A673 (cell line): ENCODE measurements at regions of chr2 and their contacts with region 1.

Region 1: GRCh38 chr2:222318026-222318711 is 19.4 kb upstream of the PAX3 start:
- DNase-seq: peak; percentile 86
- H3K4me3 ChIP-seq: peak overlapping the region; percentile 58
- H3K27ac ChIP-seq: peak overlapping the region; percentile 59
- H3K4me1 ChIP-seq: peaks cover 23% of the 10 kb centered on the region
- H3K27me3 ChIP-seq: no peaks in the 10 kb centered on the region
- CTCF ChIP-seq: peak; percentile 70

Region 2: GRCh38 chr2:221494560-221494959 is 823.6 kb before region 1 on chr2:
- CTCF ChIA-PET with region 1: no interaction called
- POLR2A ChIA-PET with region 1: no interaction called
- intact Hi-C with region 1: no loop called
- DNase-seq: no peak
- H3K4me3 ChIP-seq: no peak overlapping the region
- H3K27ac ChIP-seq: no peak overlapping the region
- H3K4me1 ChIP-seq: no peaks in the 10 kb centered on the region
- H3K27me3 ChIP-seq: no peaks in the 10 kb centered on the region
- CTCF ChIP-seq: no peak

Region 3: DNA sequence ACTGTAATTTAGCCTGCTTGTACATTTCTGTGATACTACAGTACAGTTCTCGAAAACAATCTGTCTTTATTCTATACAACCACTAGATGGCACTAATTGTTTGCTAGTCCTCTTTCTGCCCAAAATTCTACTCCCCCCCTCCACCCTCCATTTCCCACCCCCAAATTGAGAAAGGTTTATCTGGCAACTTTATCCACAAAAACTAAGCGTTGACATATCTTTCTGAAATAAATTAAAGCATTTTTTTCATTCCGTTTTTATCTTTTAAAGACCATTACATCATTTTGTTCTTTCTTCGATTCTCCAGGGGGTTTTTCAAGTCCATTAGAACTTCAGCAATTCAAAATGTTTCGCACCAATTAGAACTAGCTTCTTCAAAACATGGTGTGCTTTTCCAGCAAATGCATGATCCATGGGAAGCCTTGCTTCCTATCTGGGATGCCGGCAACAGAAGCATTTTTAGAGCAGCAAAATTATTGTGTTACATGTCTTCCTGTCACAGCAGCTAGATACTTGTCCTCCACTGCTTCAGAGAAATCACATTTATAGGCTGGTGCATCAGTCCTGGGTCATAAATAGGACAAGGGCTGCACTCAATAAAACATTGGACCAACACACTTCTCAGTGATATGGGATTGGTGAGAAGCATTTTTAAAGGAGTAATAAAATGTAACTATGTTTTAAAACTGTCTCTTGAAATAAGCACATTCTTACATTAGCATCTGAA is 260.7 kb before region 1 on chr2:
- CTCF ChIA-PET with region 1: interaction called, 10 read pairs
- POLR2A ChIA-PET with region 1: no interaction called
- intact Hi-C with region 1: loop called (anchors 5 kb)
- DNase-seq: peak; percentile 64
- H3K4me3 ChIP-seq: no peak overlapping the region
- H3K27ac ChIP-seq: no peak overlapping the region
- H3K4me1 ChIP-seq: peaks cover 40% of the 10 kb centered on the region
- H3K27me3 ChIP-seq: no peaks in the 10 kb centered on the region
- CTCF ChIP-seq: peak; percentile 73

Region 4: GRCh38 chr2:222341331-222341730 is 23.2 kb after region 1 on chr2:
- CTCF ChIA-PET with region 1: no interaction called
- POLR2A ChIA-PET with region 1: interaction called, 13 read pairs
- intact Hi-C with region 1: no loop called
- DNase-seq: no peak
- H3K4me3 ChIP-seq: no peak overlapping the region
- H3K27ac ChIP-seq: no peak overlapping the region
- H3K4me1 ChIP-seq: no peaks in the 10 kb centered on the region
- H3K27me3 ChIP-seq: no peaks in the 10 kb centered on the region
- CTCF ChIP-seq: no peak

Region 5: GRCh38 chr2:222483513-222484039 is 165.4 kb after region 1 on chr2:
- CTCF ChIA-PET with region 1: interaction called, 7 read pairs
- POLR2A ChIA-PET with region 1: no interaction called
- intact Hi-C with region 1: loop called (anchors 5 kb)
- DNase-seq: peak; percentile 43
- H3K4me3 ChIP-seq: no peak overlapping the region
- H3K27ac ChIP-seq: no peak overlapping the region
- H3K4me1 ChIP-seq: peaks cover 17% of the 10 kb centered on the region
- H3K27me3 ChIP-seq: no peaks in the 10 kb centered on the region
- CTCF ChIP-seq: peak; percentile 40; the same call in 1 of the 2 replicates

Region 6: DNA sequence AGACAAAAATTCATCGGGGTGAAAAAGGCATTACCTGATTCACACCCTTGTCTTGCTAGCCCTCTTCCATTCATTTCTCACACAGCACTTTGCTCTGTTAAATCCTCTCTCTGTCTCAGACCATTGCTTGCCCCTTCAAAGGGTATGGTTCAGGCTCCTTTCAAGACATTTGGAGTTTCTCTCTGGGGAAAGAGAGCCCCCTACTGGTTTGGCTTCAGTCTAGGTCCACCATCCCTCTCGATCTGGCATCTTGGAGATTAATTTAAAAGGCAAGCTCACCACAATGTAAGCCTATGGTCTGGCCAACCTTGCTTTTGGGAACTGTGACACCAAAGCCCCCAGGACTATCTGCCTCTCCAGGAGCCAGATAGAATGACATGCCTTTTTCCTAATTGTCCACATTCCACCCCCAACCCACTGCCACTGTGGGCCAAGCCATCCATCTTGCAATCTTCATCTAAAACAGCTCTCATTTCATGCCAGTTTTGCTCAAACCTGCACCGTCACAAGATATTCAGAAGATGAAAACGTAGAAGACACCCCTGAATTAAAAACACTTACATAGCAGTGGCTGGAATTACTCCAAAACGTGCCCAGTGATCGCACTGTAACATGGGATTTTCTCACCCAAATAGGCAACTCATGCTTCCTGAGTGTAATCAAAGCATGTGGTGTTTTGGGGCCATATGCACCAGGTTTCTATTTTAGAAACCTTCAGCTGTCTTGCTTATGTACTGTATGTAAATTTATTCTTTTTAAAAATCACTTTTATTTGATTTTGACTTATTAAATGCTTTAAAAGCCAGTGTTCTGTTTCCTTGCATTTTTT is 243.9 kb after region 1 on chr2:
- CTCF ChIA-PET with region 1: interaction called, 13 read pairs
- POLR2A ChIA-PET with region 1: no interaction called
- intact Hi-C with region 1: loop called (anchors 1 kb)
- DNase-seq: peak; percentile 85
- H3K4me3 ChIP-seq: no peak overlapping the region
- H3K27ac ChIP-seq: no peak overlapping the region
- H3K4me1 ChIP-seq: no peaks in the 10 kb centered on the region
- H3K27me3 ChIP-seq: no peaks in the 10 kb centered on the region
- CTCF ChIP-seq: peak; percentile 84

Region 7: DNA sequence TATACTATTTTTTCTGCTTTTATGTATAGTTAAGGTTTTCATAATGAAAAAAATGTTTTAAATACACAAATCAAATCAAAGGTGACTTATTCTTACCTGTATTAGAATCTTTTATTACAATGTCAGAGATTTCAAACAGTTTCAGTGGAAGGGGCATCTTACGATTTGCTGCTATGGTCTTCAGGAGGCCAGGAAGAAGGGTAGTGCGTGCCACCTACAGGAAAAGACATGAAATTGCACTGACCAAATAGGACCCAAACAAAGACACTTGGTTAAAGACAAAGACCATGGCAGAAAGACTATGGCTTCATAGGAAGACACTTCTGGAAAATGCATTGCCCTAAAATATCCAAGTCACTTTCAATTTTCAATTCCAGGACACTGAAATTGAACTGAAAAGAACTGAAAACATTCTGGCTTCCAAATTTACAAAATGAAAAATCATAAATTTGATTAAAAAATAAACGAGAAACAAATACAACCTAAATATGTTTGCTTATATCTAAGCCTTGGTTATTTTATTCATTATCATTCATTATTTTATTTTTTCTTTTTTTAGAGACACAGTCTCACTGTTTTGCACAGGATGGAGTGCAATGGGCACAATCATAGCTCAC is 295.7 kb after region 1 on chr2:
- CTCF ChIA-PET with region 1: interaction called, 4 read pairs
- POLR2A ChIA-PET with region 1: no interaction called
- intact Hi-C with region 1: loop called (anchors 1 kb)
- DNase-seq: peak; percentile 76
- H3K4me3 ChIP-seq: no peak overlapping the region
- H3K27ac ChIP-seq: no peak overlapping the region
- H3K4me1 ChIP-seq: peaks cover 7% of the 10 kb centered on the region
- H3K27me3 ChIP-seq: no peaks in the 10 kb centered on the region
- CTCF ChIP-seq: peak; percentile 86